ENCODE measurements at regions of chr2 and their contacts with region 1.

Region 1: GRCh38 chr2:146108993-146109392 is 1589.1 kb upstream of the ZEB2 start:
- DNase-seq: no peak
- ATAC-seq: no peak
- H3K4me3 ChIP-seq: no peak overlapping the region
- H3K27ac ChIP-seq: no peak overlapping the region
- H3K4me1 ChIP-seq: no peaks in the 10 kb centered on the region
- H3K27me3 ChIP-seq: no peaks in the 10 kb centered on the region
- CTCF ChIP-seq: no peak
- POLR2A ChIP-seq: no peak

Region 2: GRCh38 chr2:146031158-146031557 is 77.8 kb before region 1 on chr2:
- intact Hi-C with region 1: no loop called
- DNase-seq: no peak
- ATAC-seq: no peak
- H3K4me3 ChIP-seq: no peak overlapping the region
- H3K27ac ChIP-seq: no peak overlapping the region
- H3K4me1 ChIP-seq: no peaks in the 10 kb centered on the region
- H3K27me3 ChIP-seq: no peaks in the 10 kb centered on the region
- CTCF ChIP-seq: no peak
- POLR2A ChIP-seq: no peak

Region 3: GRCh38 chr2:146124741-146125140 is 15.7 kb after region 1 on chr2:
- intact Hi-C with region 1: loop called in 1 of 10 experiments (anchors 1 kb)
- DNase-seq: no peak
- ATAC-seq: no peak
- H3K4me3 ChIP-seq: no peak overlapping the region
- H3K27ac ChIP-seq: no peak overlapping the region
- H3K4me1 ChIP-seq: no peaks in the 10 kb centered on the region
- H3K27me3 ChIP-seq: no peaks in the 10 kb centered on the region
- CTCF ChIP-seq: no peak
- POLR2A ChIP-seq: no peak

Region 4: GRCh38 chr2:146826388-146826787 is 717.4 kb after region 1 on chr2:
- intact Hi-C with region 1: no loop called
- DNase-seq: no peak
- ATAC-seq: no peak
- H3K4me3 ChIP-seq: no peak overlapping the region
- H3K27ac ChIP-seq: no peak overlapping the region
- H3K4me1 ChIP-seq: no peaks in the 10 kb centered on the region
- H3K27me3 ChIP-seq: no peaks in the 10 kb centered on the region
- CTCF ChIP-seq: no peak
- POLR2A ChIP-seq: no peak